OCI-LY7 (cell line): ENCODE measurements at regions of chr3 and their contacts with region 1.

Region 1: GRCh38 chr3:56702490-56703315 is 19.6 kb upstream of the TASOR start:
- DNase-seq: peak; percentile 82
- H3K4me3 ChIP-seq: no peak overlapping the region
- H3K27ac ChIP-seq: no peak overlapping the region
- H3K4me1 ChIP-seq: peaks cover 11% of the 10 kb centered on the region
- CTCF ChIP-seq: peak; percentile 98

Region 2: GRCh38 chr3:56389183-56389830 is 313.4 kb before region 1 on chr3:
- CTCF ChIA-PET with region 1: no interaction called
- POLR2A ChIA-PET with region 1: no interaction called
- intact Hi-C with region 1: no loop called
- DNase-seq: no peak
- H3K4me3 ChIP-seq: no peak overlapping the region
- H3K27ac ChIP-seq: no peak overlapping the region
- H3K4me1 ChIP-seq: no peaks in the 10 kb centered on the region
- CTCF ChIP-seq: no peak

Region 3: GRCh38 chr3:56748663-56749231 is 46.0 kb after region 1 on chr3:
- CTCF ChIA-PET with region 1: no interaction called
- POLR2A ChIA-PET with region 1: no interaction called
- intact Hi-C with region 1: no loop called
- DNase-seq: no peak
- H3K4me3 ChIP-seq: no peak overlapping the region
- H3K27ac ChIP-seq: no peak overlapping the region
- H3K4me1 ChIP-seq: peaks cover 5% of the 10 kb centered on the region
- CTCF ChIP-seq: no peak

Region 4: GRCh38 chr3:56783644-56784447 is 81.1 kb after region 1 on chr3:
- CTCF ChIA-PET with region 1: no interaction called
- POLR2A ChIA-PET with region 1: interaction called, 4 read pairs
- intact Hi-C with region 1: loop called (anchors 5 kb)
- DNase-seq: peak; percentile 89
- H3K4me3 ChIP-seq: peak overlapping the region; percentile 30
- H3K27ac ChIP-seq: peak overlapping the region; percentile 52
- H3K4me1 ChIP-seq: peaks cover 60% of the 10 kb centered on the region
- CTCF ChIP-seq: no peak

Region 5: GRCh38 chr3:56988458-56989168 is 285.9 kb after region 1 on chr3:
- CTCF ChIA-PET with region 1: no interaction called
- POLR2A ChIA-PET with region 1: interaction called, 4 read pairs
- intact Hi-C with region 1: loop called (anchors 1 kb)
- DNase-seq: peak; percentile 78
- H3K4me3 ChIP-seq: no peak overlapping the region
- H3K27ac ChIP-seq: no peak overlapping the region
- H3K4me1 ChIP-seq: peaks cover 40% of the 10 kb centered on the region
- CTCF ChIP-seq: peak; percentile 99